ENCODE measurements at regions of chr12 and their contacts with region 1.

Region 1: GRCh38 chr12:114476159-114476558 is 70.2 kb upstream of the TBX5 start:
- ATAC-seq: peak in 3 of 8 experiments; percentile 53 to 70 (median 69)
- H3K4me3 ChIP-seq: no peak overlapping the region
- H3K27ac ChIP-seq: no peak overlapping the region
- H3K4me1 ChIP-seq: peaks cover 0 to 3% of the 10 kb centered on the region in 2 donors

Region 2: GRCh38 chr12:114166362-114166761 is 309.8 kb before region 1 on chr12:
- in situ Hi-C with region 1: loop called in 1 of 9 experiments (anchors 25 kb)
- ATAC-seq: peak in 3 of 8 experiments; percentile 38 to 74 (median 68)
- H3K4me3 ChIP-seq: no peak overlapping the region
- H3K27ac ChIP-seq: no peak overlapping the region
- H3K4me1 ChIP-seq: no peaks in the 10 kb centered on the region